ENCODE measurements at regions of chr1 and their contacts with region 1.

Region 1: DNA sequence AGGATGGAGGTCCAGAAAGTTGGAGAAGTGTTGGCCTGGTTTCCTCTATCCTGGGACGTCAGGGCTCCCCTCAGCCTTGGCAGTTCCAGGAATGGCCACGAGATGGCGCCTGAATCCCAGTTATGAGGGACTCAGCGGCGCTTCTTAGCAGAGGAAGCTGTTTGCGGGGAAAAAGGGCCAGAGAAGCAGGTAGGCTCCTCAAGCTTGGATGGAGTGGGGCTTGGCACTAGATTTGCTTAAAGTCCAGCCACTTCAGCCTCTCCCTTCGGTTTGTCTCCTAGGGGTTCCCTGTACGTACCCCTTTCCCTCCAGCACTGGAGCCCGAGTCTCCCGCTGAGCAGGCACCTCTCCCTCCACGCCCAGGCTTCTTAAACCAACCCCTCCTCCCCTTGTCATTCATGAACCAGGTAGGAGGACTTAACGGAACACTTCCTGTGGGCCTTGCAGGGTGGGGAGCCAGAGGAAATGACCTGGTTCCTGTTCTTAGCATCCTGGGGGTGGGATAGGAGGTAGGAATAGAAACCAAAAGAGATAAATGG is 32.0 kb upstream of the TENT5B start:
- DNase-seq: peak; percentile 96
- H3K4me3 Mint-ChIP-seq: peak overlapping the region; percentile 70
- H3K27ac Mint-ChIP-seq: no peak overlapping the region
- H3K4me1 Mint-ChIP-seq: peaks cover 20% of the 10 kb centered on the region
- H3K27me3 Mint-ChIP-seq: no peaks in the 10 kb centered on the region

Region 2: DNA sequence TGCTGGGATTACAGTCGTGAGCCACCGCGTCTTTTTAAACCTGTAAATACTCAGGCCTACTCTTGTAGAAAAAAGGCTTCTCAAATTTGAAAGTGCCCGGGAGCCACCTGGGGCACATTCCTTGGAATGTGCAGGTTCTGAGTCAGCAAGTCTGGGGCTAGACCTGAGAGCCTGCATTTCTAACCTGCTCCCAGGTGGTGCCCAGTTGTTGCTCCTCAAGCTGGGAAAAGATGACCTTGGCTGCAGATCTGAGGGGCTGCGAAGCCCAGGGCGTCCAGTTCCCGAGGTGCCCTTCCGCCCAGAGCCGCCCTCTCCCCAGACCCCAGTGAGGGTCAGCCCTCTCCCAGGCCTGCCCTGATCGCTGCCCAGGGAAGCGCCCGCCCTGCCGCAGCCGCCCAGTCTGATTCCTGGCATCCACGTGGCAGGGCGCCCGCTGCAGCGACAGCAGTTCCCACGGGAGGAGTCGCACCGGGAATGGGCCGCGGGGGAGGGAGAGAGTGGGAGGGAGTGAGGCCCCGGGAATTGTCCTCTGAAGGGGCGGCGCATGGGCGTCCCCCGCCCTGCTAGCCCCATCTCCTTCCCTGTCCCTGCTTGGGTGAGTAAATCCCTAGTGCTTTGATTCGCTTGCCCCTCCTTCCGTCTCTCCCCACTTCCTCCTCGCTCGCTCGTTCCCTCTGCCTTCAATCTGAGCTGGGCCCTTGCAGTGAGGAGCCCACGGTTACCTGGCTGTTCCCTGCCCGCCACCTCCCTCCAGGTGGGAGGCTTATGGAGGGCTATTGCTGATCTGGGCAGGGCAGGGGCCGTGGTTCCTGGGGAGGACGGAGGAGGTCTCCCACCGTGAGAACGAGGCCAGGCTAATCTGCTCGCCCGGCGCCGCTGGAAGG is 13.2 kb before region 1 on chr1:
- CTCF ChIA-PET with region 1: interaction called, 22 read pairs
- intact Hi-C with region 1: no loop called
- DNase-seq: no peak
- H3K4me3 Mint-ChIP-seq: no peak overlapping the region
- H3K27ac Mint-ChIP-seq: no peak overlapping the region
- H3K4me1 Mint-ChIP-seq: no peaks in the 10 kb centered on the region
- H3K27me3 Mint-ChIP-seq: no peaks in the 10 kb centered on the region

Region 3: DNA sequence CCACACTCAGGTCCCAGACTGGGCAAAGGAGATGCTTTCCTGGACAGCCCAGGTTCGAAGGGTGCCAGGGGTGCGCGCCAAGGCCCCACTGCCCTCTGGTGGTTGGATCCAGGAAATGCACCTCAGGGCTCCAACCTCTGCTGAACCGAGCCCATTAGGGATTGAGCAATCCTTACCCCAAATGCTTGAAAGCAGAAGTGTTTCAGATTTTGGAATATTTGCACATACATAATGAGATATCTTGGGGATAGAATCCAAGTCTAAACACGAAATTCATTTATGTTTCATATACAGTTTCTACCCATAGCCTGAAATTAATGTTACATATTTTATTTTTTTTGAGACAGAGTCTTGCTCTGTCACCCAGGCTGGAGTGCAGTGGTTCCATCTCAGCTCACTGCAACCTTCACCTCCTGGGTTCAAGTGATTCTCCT is 52.8 kb after region 1 on chr1:
- CTCF ChIA-PET with region 1: interaction called, 215 read pairs
- intact Hi-C with region 1: loop called (anchors 1 kb)
- DNase-seq: peak; percentile 86
- H3K4me3 Mint-ChIP-seq: no peak overlapping the region
- H3K27ac Mint-ChIP-seq: no peak overlapping the region
- H3K4me1 Mint-ChIP-seq: peaks cover 7% of the 10 kb centered on the region
- H3K27me3 Mint-ChIP-seq: no peaks in the 10 kb centered on the region

Region 4: DNA sequence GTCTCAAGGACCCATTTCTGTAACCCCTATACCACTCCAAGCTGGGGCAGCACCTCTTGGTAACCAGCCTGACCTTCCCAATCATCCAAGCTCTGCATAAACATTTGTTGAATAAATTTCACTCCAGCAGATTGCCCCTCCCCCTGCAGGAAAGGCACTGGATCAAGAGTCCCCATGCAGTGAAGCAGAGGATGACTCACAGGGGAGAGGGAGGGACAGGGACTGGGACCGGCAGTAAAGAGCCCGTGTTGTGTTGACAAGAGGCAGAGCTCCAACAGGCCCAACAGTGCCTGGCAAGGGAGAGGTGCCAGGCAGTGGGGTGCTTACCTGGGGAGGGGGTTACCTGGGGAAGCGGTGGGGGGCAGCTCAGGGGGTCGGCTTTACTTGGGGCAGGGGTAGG is 78.0 kb after region 1 on chr1:
- CTCF ChIA-PET with region 1: no interaction called
- intact Hi-C with region 1: no loop called
- DNase-seq: peak; percentile 28
- H3K4me3 Mint-ChIP-seq: no peak overlapping the region
- H3K27ac Mint-ChIP-seq: no peak overlapping the region
- H3K4me1 Mint-ChIP-seq: peaks cover 2% of the 10 kb centered on the region
- H3K27me3 Mint-ChIP-seq: no peaks in the 10 kb centered on the region

Region 5: GRCh38 chr1:27192039-27192529 is 147.4 kb after region 1 on chr1:
- CTCF ChIA-PET with region 1: interaction called, 4 read pairs
- intact Hi-C with region 1: loop called (anchors 2 kb)
- DNase-seq: no peak
- H3K4me3 Mint-ChIP-seq: no peak overlapping the region
- H3K27ac Mint-ChIP-seq: no peak overlapping the region
- H3K4me1 Mint-ChIP-seq: no peaks in the 10 kb centered on the region
- H3K27me3 Mint-ChIP-seq: no peaks in the 10 kb centered on the region

Region 6: GRCh38 chr1:27284425-27285273 is 240.0 kb after region 1 on chr1:
- CTCF ChIA-PET with region 1: interaction called, 7 read pairs
- intact Hi-C with region 1: loop called (anchors 1 kb)
- DNase-seq: peak; percentile 97
- H3K4me3 Mint-ChIP-seq: no peak overlapping the region
- H3K27ac Mint-ChIP-seq: no peak overlapping the region
- H3K4me1 Mint-ChIP-seq: peaks cover 2% of the 10 kb centered on the region
- H3K27me3 Mint-ChIP-seq: no peaks in the 10 kb centered on the region

Region 7: DNA sequence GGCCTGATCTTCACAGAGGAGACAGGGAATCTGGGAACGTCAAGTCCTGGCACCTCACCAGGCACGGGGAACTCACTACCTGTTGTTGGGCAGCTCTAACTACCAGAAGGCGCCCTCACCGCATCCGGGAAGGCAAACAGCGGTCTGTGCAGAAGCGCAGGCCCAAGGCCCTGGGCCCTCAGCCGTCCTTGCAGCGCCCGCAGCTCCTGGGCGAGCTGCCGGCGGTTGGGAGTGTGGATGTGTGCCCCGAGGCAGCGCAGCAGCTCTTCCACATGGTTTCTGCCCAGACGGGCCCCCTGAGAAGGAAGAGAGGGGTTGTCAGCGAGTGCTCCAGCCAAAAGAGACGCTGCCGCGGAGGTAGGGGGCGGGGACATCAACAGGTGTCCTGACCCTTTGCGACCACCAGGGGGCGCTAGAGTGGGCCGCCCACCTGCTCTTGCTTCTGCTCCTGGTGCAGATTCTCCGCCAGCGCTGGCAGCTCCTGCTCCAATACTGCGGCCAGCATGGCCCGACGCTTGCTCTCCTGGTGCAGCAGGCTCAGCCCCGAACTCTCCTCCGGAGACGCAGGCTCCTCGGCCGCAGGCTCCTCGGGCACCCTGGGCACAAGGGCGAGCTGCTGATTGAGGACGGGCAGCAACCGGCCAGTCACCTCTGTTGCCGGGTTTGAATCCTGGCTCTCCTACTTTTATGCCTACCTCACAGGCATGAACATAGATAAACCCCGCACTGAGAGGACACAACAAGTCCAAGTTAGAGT is 312.8 kb after region 1 on chr1:
- CTCF ChIA-PET with region 1: no interaction called
- intact Hi-C with region 1: no loop called
- DNase-seq: peak; percentile 86
- H3K4me3 Mint-ChIP-seq: peak overlapping the region; percentile 70
- H3K27ac Mint-ChIP-seq: peak overlapping the region; percentile 78
- H3K4me1 Mint-ChIP-seq: peaks cover 38% of the 10 kb centered on the region
- H3K27me3 Mint-ChIP-seq: no peaks in the 10 kb centered on the region

Region 8: DNA sequence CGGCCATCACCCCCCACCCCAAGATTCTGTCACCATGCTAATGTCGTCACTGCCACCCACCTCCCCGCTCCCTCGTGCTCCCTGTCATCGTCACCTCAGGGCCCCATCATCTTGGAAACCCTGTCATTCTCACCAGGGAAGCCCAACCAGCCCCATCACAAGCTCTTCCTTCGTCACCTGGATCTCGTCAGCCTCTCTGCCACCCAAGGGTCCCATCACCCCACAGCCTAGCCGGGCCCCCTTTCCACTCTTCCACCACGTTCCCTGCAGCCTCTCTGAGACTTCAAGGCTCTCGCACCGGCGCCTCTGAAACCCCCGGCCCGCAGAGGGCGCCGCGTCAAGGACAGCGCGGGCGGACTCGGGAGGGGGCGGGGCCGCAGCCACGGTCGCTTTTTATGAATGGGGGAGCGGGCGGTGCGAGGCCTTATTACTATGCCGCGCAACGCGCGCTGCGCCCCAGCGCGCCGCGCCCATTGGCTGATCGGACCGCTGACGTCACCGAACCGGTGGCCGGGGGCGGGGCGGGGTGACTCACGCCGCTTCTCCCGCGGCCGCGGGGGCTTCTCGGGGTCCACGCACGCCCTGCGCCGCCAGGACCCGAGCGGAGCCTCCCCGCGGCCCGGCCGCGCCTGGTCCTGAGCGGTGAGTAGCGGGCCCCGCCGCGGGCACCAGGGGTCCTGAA is 347.6 kb after region 1 on chr1 and contains the start of gene GPR3:
- CTCF ChIA-PET with region 1: interaction called, 3 read pairs
- intact Hi-C with region 1: loop called (anchors 2 kb)
- DNase-seq: peak; percentile 95
- H3K4me3 Mint-ChIP-seq: peak within 1 kb of the TSS; percentile 95
- H3K27ac Mint-ChIP-seq: peak within 1 kb of the TSS; percentile 75
- H3K4me1 Mint-ChIP-seq: peaks cover 19% of the 10 kb centered on the region
- H3K27me3 Mint-ChIP-seq: no peaks in the 10 kb centered on the region
- total RNA-seq, gene GPR3: 0.64 to 0.74 TPM